ENCODE measurements at regions of chr13 and their contacts with region 1.

Region 1: GRCh38 chr13:74560325-74560724 is 426.1 kb upstream of the KLF12 start:
- DNase-seq: no peak
- ATAC-seq: no peak
- H3K4me3 ChIP-seq: no peak overlapping the region
- H3K4me3 Mint-ChIP-seq: no peak overlapping the region
- H3K27ac ChIP-seq: no peak overlapping the region
- H3K27ac Mint-ChIP-seq: no peak overlapping the region
- H3K4me1 ChIP-seq: no peaks in the 10 kb centered on the region
- H3K4me1 Mint-ChIP-seq: peaks cover 0 to under 1% (median 0%) of the 10 kb centered on the region in 3 donors
- H3K27me3 ChIP-seq: no peaks in the 10 kb centered on the region
- H3K27me3 Mint-ChIP-seq: no peaks in the 10 kb centered on the region

Region 2: DNA sequence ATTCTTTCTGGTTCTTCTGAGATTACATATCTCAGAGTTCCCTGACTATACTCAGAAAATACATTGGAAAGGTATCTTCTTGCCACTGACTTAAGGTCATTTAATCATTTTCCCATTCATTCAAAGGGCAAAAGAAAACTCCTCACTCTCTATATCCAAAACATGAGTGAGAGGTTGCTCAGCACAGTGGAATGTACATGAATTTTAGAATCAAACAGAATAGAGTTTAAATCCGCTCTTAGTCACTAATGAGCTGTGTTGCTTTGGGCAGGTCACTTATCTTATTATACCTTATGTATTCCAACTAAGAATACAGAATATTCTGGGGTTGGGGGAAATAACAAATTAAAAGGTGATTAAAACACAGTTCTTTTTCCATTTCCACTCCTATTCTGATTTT is 26.5 kb after region 1 on chr13:
- CTCF ChIA-PET with region 1: no interaction called
- POLR2A ChIA-PET with region 1: interaction called in 1 of 2 experiments, 11 read pairs
- DNase-seq: no peak
- ATAC-seq: no peak
- H3K4me3 ChIP-seq: no peak overlapping the region
- H3K4me3 Mint-ChIP-seq: no peak overlapping the region
- H3K27ac ChIP-seq: no peak overlapping the region
- H3K27ac Mint-ChIP-seq: no peak overlapping the region
- H3K4me1 ChIP-seq: no peaks in the 10 kb centered on the region
- H3K4me1 Mint-ChIP-seq: no peaks in the 10 kb centered on the region
- H3K27me3 ChIP-seq: peaks cover 0 to 2% of the 10 kb centered on the region in 2 experiments
- H3K27me3 Mint-ChIP-seq: peaks cover 5 to 43% of the 10 kb centered on the region in 2 donors